Activated CD4-positive, alpha-beta T cell treated with anti-CD3 and anti-CD28 coated beads, Interleukin-2, amount 10 ng/mL, durations not matched to agents 24 days and 14 days (primary cell): ENCODE measurements at regions of chr17 and their contacts with region 1.

Region 1: GRCh38 chr17:78112518-78113226 is 15.9 kb downstream of the TMC6 start:
- DNase-seq: peak; percentile 94
- H3K4me3 Mint-ChIP-seq: no peak overlapping the region
- H3K27ac Mint-ChIP-seq: no peak overlapping the region
- H3K4me1 Mint-ChIP-seq: peaks cover 30% of the 10 kb centered on the region
- H3K27me3 Mint-ChIP-seq: no peaks in the 10 kb centered on the region

Region 2: GRCh38 chr17:78032166-78032565 is 80.5 kb before region 1 on chr17:
- intact Hi-C with region 1: no loop called
- DNase-seq: no peak
- H3K4me3 Mint-ChIP-seq: no peak overlapping the region
- H3K27ac Mint-ChIP-seq: no peak overlapping the region
- H3K4me1 Mint-ChIP-seq: peaks cover 10% of the 10 kb centered on the region
- H3K27me3 Mint-ChIP-seq: no peaks in the 10 kb centered on the region

Region 3: GRCh38 chr17:78082988-78083387 is 29.7 kb before region 1 on chr17:
- intact Hi-C with region 1: loop called (anchors 1 kb)
- DNase-seq: no peak
- H3K4me3 Mint-ChIP-seq: no peak overlapping the region
- H3K27ac Mint-ChIP-seq: no peak overlapping the region
- H3K4me1 Mint-ChIP-seq: peaks cover 6% of the 10 kb centered on the region
- H3K27me3 Mint-ChIP-seq: no peaks in the 10 kb centered on the region

Region 4: DNA sequence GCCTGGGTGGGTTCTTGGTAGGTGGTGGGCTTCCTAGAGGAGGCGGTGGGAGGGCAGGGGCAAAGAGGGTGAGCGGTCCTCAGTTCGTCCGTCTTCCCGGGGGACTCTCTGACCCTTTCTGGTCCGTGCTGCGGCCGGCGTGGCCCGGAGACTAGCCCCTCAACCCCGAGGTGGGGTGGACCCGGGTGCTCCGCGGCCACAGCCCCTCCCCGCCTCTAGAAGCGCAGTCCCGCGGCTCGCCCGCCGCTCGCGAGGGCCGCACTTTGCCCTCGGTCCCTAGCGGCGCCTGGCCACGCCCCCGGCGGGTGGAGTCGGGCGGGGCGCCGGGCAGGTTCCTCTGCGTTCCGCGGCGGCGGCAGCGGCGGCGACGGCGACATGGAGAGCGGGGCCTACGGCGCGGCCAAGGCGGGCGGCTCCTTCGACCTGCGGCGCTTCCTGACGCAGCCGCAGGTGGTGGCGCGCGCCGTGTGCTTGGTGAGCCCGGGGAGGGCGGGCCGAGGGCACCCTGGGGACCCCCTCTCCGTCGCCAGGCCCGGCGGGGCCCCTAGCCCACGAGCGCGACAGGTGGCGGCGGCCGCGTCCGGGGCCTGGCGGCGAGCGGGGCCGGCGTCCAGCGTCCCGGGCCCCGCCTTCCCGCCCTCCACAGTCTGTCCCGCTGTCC is 55.7 kb after region 1 on chr17 and contains the start of gene SYNGR2:
- intact Hi-C with region 1: loop called (anchors 2 kb)
- DNase-seq: peak; percentile 98
- H3K4me3 Mint-ChIP-seq: peak within 1 kb of the TSS; percentile 81
- H3K27ac Mint-ChIP-seq: peak within 1 kb of the TSS; percentile 78
- H3K4me1 Mint-ChIP-seq: peaks cover 30% of the 10 kb centered on the region
- H3K27me3 Mint-ChIP-seq: no peaks in the 10 kb centered on the region
- total RNA-seq, gene SYNGR2: 123 and 125 TPM in 2 replicates

Region 5: GRCh38 chr17:78176548-78177025 is 63.9 kb after region 1 on chr17:
- intact Hi-C with region 1: loop called (anchors 1 kb)
- DNase-seq: peak; percentile 95
- H3K4me3 Mint-ChIP-seq: no peak overlapping the region
- H3K27ac Mint-ChIP-seq: no peak overlapping the region
- H3K4me1 Mint-ChIP-seq: peaks cover 38% of the 10 kb centered on the region
- H3K27me3 Mint-ChIP-seq: no peaks in the 10 kb centered on the region

Region 6: GRCh38 chr17:78272181-78272913 is 159.7 kb after region 1 on chr17:
- intact Hi-C with region 1: no loop called
- DNase-seq: peak; percentile 86
- H3K4me3 Mint-ChIP-seq: no peak overlapping the region
- H3K27ac Mint-ChIP-seq: peak overlapping the region; percentile 60
- H3K4me1 Mint-ChIP-seq: peaks cover 34% of the 10 kb centered on the region
- H3K27me3 Mint-ChIP-seq: no peaks in the 10 kb centered on the region